Endothelial cell of umbilical vein (primary cell): ENCODE measurements at regions of chr17 and their contacts with region 1.

Region 1: DNA sequence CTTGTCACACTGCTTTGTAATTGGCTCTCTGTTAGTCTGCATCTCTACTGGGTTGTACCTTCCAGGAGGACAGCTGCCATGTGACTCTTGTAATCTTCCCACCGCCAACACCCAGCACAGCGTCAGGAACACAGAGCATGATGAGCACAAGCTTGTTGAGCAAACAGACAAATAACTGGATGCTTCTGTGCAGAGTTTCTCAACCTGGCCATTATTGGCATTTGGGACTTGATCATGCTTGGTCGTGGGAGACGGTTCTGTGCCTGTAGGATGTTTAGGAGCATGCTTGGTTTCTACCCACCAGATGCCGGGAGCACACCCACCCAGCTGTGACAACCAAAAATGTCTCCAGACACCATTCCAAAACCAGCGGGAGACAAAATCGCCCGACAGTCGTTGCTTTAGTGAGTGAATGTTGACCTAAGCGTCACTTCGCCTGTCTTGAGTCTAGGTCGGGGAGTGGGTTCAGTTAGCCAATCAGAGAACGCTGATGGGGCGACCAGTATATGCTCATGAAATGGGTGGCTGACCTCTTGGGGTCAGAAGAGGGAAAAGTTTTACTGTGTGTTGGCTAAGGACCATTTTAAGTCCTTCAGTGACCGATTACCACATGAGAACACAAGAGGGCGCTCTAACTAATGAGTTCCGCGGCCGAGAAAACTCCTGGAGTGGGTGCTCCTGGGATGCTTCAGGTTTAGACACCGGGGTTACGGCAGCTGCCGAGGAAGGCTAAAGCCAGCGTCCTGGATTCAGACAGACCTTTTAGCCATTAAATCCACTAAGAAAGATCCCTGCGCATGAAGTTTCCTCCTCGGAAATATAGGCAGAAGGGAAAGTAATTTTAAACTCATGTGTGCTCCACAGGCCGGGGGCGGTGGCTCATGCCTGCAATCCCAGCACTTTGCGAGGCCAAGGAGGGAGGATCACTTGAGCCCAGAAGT is 57.8 kb upstream of the TEX2 start:
- DNase-seq: peak; percentile 85
- H3K4me3 ChIP-seq: no peak overlapping the region
- H3K27ac ChIP-seq: no peak overlapping the region
- H3K4me1 ChIP-seq: peaks cover 33% of the 10 kb centered on the region
- H3K27me3 ChIP-seq: no peaks in the 10 kb centered on the region
- CTCF ChIP-seq: peak; percentile 70 to 80
- POLR2A ChIP-seq: no peak

Region 2: DNA sequence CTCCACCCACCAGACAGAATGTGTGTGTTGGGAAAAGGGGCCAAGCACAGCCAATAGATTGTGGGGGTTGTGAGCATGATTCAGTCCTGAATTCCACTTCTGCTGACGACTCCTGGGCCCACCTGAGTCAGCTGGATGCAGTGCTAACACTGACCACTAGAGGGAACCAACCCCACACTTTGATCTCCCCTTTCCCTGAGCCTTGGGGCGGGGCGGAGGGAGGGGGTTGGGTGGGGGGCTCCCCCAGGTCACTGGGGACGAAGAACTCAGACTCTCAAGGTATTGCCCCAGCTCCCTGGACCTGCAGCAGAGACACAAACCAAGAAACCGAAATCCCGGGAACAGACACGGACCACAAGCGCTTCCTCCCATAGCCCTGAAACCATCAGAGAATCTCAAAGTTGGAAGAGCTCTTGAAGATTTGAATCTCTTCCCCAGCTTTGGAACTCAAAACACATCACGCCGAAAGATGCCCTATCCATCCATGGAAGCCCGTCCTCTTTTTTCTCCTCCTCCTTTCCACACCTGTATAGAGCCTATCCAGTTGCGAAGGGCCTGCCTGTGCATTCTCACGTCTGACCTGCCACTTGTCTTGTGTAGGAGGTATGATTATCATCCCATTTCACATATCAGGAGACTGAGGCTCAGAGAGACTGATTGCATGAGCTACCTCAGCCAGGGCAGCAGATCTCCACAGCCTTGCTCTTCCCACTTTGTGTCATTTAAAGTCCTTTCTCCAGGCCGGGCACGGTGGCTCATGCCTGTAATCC is 409.0 kb before region 1 on chr17:
- CTCF ChIA-PET with region 1: no interaction called
- POLR2A ChIA-PET with region 1: no interaction called
- dilution Hi-C with region 1: no loop called
- intact Hi-C with region 1: no loop called
- DNase-seq: peak; percentile 26
- H3K4me3 ChIP-seq: no peak overlapping the region
- H3K27ac ChIP-seq: no peak overlapping the region
- H3K4me1 ChIP-seq: no peaks in the 10 kb centered on the region
- H3K27me3 ChIP-seq: peaks cover 6 to 8% of the 10 kb centered on the region in 2 experiments
- CTCF ChIP-seq: peak; percentile 34 to 70
- POLR2A ChIP-seq: no peak

Region 3: GRCh38 chr17:64278614-64279013 is 42.3 kb before region 1 on chr17:
- CTCF ChIA-PET with region 1: no interaction called
- POLR2A ChIA-PET with region 1: no interaction called
- dilution Hi-C with region 1: no loop called
- intact Hi-C with region 1: no loop called
- DNase-seq: peak; percentile 59
- H3K4me3 ChIP-seq: no peak overlapping the region
- H3K27ac ChIP-seq: no peak overlapping the region
- H3K4me1 ChIP-seq: peaks cover 17% of the 10 kb centered on the region
- H3K27me3 ChIP-seq: no peaks in the 10 kb centered on the region
- CTCF ChIP-seq: no peak
- POLR2A ChIP-seq: no peak

Region 4: GRCh38 chr17:64343853-64344637 is 23.2 kb after region 1 on chr17:
- CTCF ChIA-PET with region 1: interaction called, 5 read pairs
- POLR2A ChIA-PET with region 1: interaction called, 3 read pairs
- dilution Hi-C with region 1: no loop called
- intact Hi-C with region 1: loop called (anchors 1 kb)
- DNase-seq: peak; percentile 99
- H3K4me3 ChIP-seq: no peak overlapping the region
- H3K27ac ChIP-seq: peak overlapping the region; percentile 89
- H3K4me1 ChIP-seq: peaks cover 41% of the 10 kb centered on the region
- H3K27me3 ChIP-seq: no peaks in the 10 kb centered on the region
- CTCF ChIP-seq: no peak
- POLR2A ChIP-seq: peak; percentile 38

Region 5: DNA sequence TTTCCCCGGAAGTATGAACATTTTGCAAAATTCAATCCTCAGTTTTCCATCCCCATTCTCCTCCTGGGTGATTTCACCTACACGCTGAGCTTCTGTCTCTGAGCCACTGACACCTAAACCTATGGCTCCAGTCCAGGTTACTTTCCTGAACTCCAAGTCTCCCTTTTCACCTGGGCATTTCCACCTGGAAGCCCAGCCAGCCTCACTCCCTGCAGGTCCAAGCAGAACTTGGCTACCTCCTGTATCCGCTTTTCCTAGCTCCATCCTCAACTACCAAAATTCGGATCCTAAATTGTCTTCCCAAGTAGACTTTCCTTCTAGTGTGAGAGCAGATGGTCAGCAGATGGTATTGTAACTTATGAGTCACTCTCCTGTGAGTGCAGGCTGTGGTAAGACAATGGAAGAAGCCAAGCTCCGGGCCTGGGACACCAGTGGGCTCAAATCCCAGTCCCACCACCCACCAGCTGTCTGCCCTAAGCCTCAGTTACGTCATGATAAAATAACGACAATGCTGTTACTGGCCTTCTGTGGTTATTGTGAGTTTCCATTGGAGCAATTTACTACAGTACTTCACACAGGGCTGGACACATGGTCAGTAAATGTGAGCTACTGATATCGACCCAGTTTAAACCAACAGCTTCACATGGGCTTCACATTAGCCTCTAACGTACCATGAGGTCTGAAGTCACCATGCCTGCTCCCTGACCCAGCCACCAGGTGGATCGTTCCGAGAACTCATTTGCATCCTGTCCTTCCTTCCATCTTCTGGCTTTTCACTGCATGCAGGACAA is 36.5 kb after region 1 on chr17:
- CTCF ChIA-PET with region 1: interaction called, 16 read pairs
- POLR2A ChIA-PET with region 1: no interaction called
- dilution Hi-C with region 1: no loop called
- intact Hi-C with region 1: loop called (anchors 1 kb)
- DNase-seq: peak; percentile 91
- H3K4me3 ChIP-seq: no peak overlapping the region
- H3K27ac ChIP-seq: peak overlapping the region; percentile 38
- H3K4me1 ChIP-seq: peaks cover 60% of the 10 kb centered on the region
- H3K27me3 ChIP-seq: no peaks in the 10 kb centered on the region
- CTCF ChIP-seq: no peak
- POLR2A ChIP-seq: peak; percentile 45

Region 6: GRCh38 chr17:64378890-64379354 is 58.0 kb after region 1 on chr17:
- CTCF ChIA-PET with region 1: interaction called, 15 read pairs
- POLR2A ChIA-PET with region 1: interaction called, 3 read pairs
- dilution Hi-C with region 1: no loop called
- intact Hi-C with region 1: loop called (anchors 5 kb)
- DNase-seq: peak; percentile 83
- H3K4me3 ChIP-seq: no peak overlapping the region
- H3K27ac ChIP-seq: peak overlapping the region; percentile 31
- H3K4me1 ChIP-seq: peaks cover 54% of the 10 kb centered on the region
- H3K27me3 ChIP-seq: no peaks in the 10 kb centered on the region
- CTCF ChIP-seq: no peak
- POLR2A ChIP-seq: peak; percentile 59

Region 7: GRCh38 chr17:64399071-64399766 is 78.3 kb after region 1 on chr17:
- CTCF ChIA-PET with region 1: no interaction called
- POLR2A ChIA-PET with region 1: interaction called, 3 read pairs
- dilution Hi-C with region 1: loop called (anchors 10 kb)
- intact Hi-C with region 1: no loop called
- DNase-seq: peak; percentile 43
- H3K4me3 ChIP-seq: no peak overlapping the region
- H3K27ac ChIP-seq: peak overlapping the region; percentile 81
- H3K4me1 ChIP-seq: peaks cover 32% of the 10 kb centered on the region
- H3K27me3 ChIP-seq: no peaks in the 10 kb centered on the region
- CTCF ChIP-seq: no peak
- POLR2A ChIP-seq: no peak